Right lobe of liver (tissue), 6 donors: ENCODE measurements at regions of chr2 and their contacts with region 1.

Region 1: DNA sequence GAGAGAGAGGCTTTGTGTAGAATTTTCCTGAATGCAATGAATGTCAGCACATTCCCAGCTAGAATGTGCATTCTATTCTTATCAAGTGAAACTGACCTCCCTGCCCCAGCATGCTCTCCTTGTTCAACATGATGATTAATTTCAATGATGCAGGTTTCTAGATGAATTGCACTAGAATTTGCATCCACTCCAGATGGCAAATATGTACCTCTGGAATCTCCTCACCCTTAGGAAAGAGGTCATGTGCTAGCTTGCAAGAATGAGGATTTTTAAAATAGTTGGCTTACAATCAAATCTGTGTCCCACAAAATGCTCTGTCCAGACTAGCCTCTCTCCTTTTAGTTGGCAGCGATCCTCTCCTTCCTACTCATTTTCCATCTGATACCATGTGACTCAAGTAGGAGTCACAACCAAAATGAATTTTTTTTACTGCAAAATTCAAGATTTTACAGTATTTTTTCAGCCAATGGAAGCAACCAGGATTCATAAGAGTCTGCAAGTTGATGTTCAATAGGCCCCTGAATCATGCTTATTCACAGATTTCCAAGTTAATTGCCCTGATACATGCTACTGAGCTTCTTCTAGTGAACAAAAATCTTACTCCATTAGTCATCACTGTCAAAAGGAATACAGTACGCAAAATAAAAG is 21.0 kb upstream of the STAT4 start:
- DNase-seq: no peak
- ATAC-seq: peak; percentile 9 to 52 (median 30)
- H3K4me3 ChIP-seq: no peak overlapping the region
- H3K27ac ChIP-seq: peak overlapping the region; percentile 42 to 69 (median 62)
- H3K4me1 ChIP-seq: peaks cover 0 to 81% (median 25%) of the 10 kb centered on the region in 4 donors
- H3K27me3 ChIP-seq: no peaks in the 10 kb centered on the region
- CTCF ChIP-seq: no peak
- POLR2A ChIP-seq: no peak

Region 2: GRCh38 chr2:191245046-191245868 is 73.4 kb after region 1 on chr2 and contains the start of gene MYO1B:
- intact Hi-C with region 1: loop called in 1 of 2 experiments (anchors 10 kb)
- DNase-seq: peak; percentile 91 to 92 (median 92)
- ATAC-seq: peak; percentile 76 to 92 (median 80)
- H3K4me3 ChIP-seq: peak within 1 kb of the TSS; percentile 77 to 91 (median 84)
- H3K27ac ChIP-seq: peak within 1 kb of the TSS; percentile 75 to 92 (median 91)
- H3K4me1 ChIP-seq: peaks cover 0 to 37% (median 15%) of the 10 kb centered on the region in 4 donors
- H3K27me3 ChIP-seq: no peaks in the 10 kb centered on the region
- CTCF ChIP-seq: peak; percentile 40 to 82 (median 68)
- POLR2A ChIP-seq: peak; percentile 93
- total RNA-seq, gene MYO1B: 171 to 273 (median 221) TPM

Region 3: GRCh38 chr2:191291471-191291870 is 119.6 kb after region 1 on chr2:
- intact Hi-C with region 1: no loop called
- DNase-seq: no peak
- ATAC-seq: peak in 1 of 4 donors; percentile 39
- H3K4me3 ChIP-seq: no peak overlapping the region
- H3K27ac ChIP-seq: no peak overlapping the region
- H3K4me1 ChIP-seq: peaks cover 0 to 65% (median 7%) of the 10 kb centered on the region in 4 donors
- H3K27me3 ChIP-seq: no peaks in the 10 kb centered on the region
- CTCF ChIP-seq: no peak
- POLR2A ChIP-seq: no peak